ENCODE measurements at regions of chr4 and their contacts with region 1.

Region 1: DNA sequence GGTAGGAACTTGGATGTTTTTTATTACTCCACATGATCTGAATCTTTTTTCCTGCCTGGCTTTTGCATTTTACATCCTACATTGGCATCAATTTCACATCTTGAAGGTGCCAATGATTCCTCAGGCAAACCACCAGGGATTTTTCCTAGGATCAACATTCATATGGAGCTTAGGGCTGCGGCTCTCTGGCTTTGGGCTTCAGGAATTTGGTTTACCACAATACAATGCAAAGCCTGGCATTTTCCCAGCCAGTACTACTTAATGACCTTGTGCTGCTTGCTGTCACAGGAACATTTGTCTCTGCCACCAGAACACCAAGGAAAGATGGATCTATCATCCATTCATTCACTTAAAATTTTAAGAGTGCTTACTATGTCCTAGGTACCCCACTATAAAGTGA is 180.7 kb downstream of the PDGFC start:
- DNase-seq: peak in 1 of 2 donors; percentile 41
- H3K4me3 ChIP-seq: no peak overlapping the region
- H3K27ac ChIP-seq: no peak overlapping the region
- H3K4me1 ChIP-seq: no peaks in the 10 kb centered on the region
- H3K27me3 ChIP-seq: no peaks in the 10 kb centered on the region
- CTCF ChIP-seq: no peak
- POLR2A ChIP-seq: no peak

Region 2: GRCh38 chr4:154869301-154869700 is 1921.6 kb before region 1 on chr4:
- intact Hi-C with region 1: no loop called
- DNase-seq: no peak
- H3K4me3 ChIP-seq: no peak overlapping the region
- H3K27ac ChIP-seq: no peak overlapping the region
- H3K4me1 ChIP-seq: no peaks in the 10 kb centered on the region
- H3K27me3 ChIP-seq: no peaks in the 10 kb centered on the region
- CTCF ChIP-seq: no peak
- POLR2A ChIP-seq: no peak

Region 3: DNA sequence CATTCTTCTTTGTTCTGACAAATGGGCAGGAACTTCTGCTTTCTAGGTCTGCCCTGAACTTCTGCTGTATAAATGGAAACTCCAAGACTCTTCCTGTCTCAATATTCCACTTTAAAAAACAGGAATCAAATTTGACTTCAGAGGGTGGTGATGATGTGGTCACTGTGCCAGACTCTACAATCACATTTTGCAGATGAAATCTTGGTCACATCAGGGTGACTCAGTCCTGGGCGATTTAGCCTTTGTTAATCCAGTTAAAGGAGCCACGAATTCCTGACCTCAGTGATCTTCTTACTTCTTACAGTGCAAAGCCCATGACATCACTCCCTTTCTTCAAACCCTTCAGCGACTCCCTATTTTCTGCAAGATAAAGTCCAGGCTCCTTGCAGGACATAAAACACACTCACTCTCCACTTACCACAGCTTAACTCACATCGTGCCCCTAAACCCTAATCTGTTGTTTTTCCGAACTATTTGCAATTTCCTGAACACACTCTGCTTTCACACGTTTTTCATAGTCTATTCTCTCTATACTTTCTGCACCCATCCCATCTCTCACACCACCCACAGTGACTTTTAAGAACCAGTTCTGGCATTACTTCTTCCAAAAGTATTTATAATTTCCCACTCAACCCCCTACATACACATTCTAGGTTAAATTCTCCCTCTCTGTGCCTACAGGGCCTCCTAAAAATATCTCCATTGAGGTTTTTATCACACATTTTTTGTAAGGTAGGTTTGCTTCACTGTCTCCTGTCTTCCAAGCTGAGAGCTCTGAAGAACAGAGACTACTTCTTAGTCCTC is 1370.9 kb after region 1 on chr4:
- intact Hi-C with region 1: loop called (anchors 10 kb)
- DNase-seq: no peak
- H3K4me3 ChIP-seq: peak overlapping the region in 2 of 3 donors; percentile 6 to 41
- H3K27ac ChIP-seq: peak overlapping the region; percentile 62 to 70
- H3K4me1 ChIP-seq: peaks cover 3 to 10% of the 10 kb centered on the region in 2 donors
- H3K27me3 ChIP-seq: no peaks in the 10 kb centered on the region
- CTCF ChIP-seq: no peak
- POLR2A ChIP-seq: no peak

Measured in breast epithelium (tissue), 4 donors.